B cell (primary cell): ENCODE measurements at regions of chr1 and their contacts with region 1.

Region 1: GRCh38 chr1:109397538-109398342 is at the start of gene SORT1:
- DNase-seq: peak; percentile 75
- ATAC-seq: peak; percentile 92
- H3K4me3 ChIP-seq: peak within 1 kb of the TSS; percentile 20 to 52 (median 46)
- H3K4me3 Mint-ChIP-seq: peak within 1 kb of the TSS; percentile 88
- H3K27ac ChIP-seq: no peak within 1 kb of the TSS
- H3K27ac Mint-ChIP-seq: peak within 1 kb of the TSS; percentile 26
- H3K4me1 ChIP-seq: peaks cover 18 to 20% of the 10 kb centered on the region in 2 donors
- H3K4me1 Mint-ChIP-seq: peaks cover 22% of the 10 kb centered on the region
- H3K27me3 ChIP-seq: peaks cover 0 to 39% (median 34%) of the 10 kb centered on the region in 4 experiments
- H3K27me3 Mint-ChIP-seq: peaks cover 51% of the 10 kb centered on the region
- CTCF ChIP-seq: no peak
- total RNA-seq, gene SORT1: 0.05 and 0.25 TPM in 2 replicates

Region 2: DNA sequence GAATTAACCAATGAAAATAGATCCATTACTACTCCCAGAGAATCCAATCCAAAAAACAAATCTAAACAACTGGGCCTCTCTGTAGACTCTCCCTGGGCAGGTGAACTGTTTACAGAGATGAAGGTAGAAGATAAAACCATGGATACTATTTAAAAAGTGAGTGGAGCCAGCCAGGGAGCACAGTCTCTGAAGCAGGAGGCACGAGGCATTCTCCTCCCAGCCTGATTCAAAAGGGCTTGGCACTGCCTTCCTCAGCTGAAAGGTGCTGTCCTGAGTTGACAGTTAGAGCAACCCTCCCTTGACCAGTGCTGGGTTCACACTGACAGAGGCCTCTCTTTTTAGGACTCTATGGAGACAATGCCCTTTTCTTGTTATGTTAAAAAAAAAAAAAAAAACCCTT is 773.7 kb before region 1 on chr1:
- CTCF ChIA-PET with region 1: no interaction called
- POLR2A ChIA-PET with region 1: no interaction called
- intact Hi-C with region 1: no loop called
- DNase-seq: no peak
- ATAC-seq: no peak
- H3K4me3 ChIP-seq: no peak overlapping the region
- H3K4me3 Mint-ChIP-seq: no peak overlapping the region
- H3K27ac ChIP-seq: no peak overlapping the region
- H3K27ac Mint-ChIP-seq: no peak overlapping the region
- H3K4me1 ChIP-seq: no peaks in the 10 kb centered on the region
- H3K4me1 Mint-ChIP-seq: no peaks in the 10 kb centered on the region
- H3K27me3 ChIP-seq: no peaks in the 10 kb centered on the region
- H3K27me3 Mint-ChIP-seq: no peaks in the 10 kb centered on the region
- CTCF ChIP-seq: no peak

Region 3: DNA sequence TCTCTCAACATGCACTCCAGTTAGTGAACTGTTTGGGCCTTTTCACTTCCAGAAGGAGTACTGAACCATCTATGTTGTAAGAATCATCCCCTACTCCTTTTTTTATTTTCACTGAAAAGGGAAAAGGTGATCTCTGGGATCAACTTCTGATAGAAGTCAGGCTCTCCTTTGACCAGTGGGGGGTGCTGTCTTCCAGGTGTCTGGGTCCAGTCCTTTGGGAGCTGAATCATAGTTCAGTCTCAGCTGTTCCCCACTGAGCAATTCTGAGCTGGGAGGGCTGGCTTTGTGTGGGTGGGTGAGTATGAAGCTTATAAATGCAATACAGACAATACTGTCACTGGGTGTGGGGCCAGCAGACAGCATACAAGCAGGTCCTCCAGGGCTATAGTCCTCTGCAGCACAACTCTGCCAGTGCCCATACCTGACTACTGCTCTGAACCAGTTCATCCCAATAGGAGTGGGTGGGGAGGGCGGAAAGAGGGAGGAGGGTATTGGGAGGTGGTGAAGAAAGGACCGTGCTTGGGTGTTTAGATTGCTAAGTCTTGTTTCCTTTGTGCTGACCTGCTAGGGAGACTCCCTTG is 196.5 kb before region 1 on chr1:
- CTCF ChIA-PET with region 1: interaction called, 13 read pairs
- POLR2A ChIA-PET with region 1: no interaction called
- intact Hi-C with region 1: no loop called
- DNase-seq: no peak
- ATAC-seq: no peak
- H3K4me3 ChIP-seq: no peak overlapping the region
- H3K4me3 Mint-ChIP-seq: no peak overlapping the region
- H3K27ac ChIP-seq: no peak overlapping the region
- H3K27ac Mint-ChIP-seq: no peak overlapping the region
- H3K4me1 ChIP-seq: peaks cover 8% of the 10 kb centered on the region in 2 donors
- H3K4me1 Mint-ChIP-seq: peaks cover 9% of the 10 kb centered on the region
- H3K27me3 ChIP-seq: peaks cover 0 to 3% (median 0%) of the 10 kb centered on the region in 4 experiments
- H3K27me3 Mint-ChIP-seq: peaks cover 9% of the 10 kb centered on the region
- CTCF ChIP-seq: peak; percentile 17

Region 4: GRCh38 chr1:109277434-109278204 is 120.1 kb before region 1 on chr1:
- CTCF ChIA-PET with region 1: interaction called, 387 read pairs
- POLR2A ChIA-PET with region 1: interaction called, 5 read pairs
- intact Hi-C with region 1: loop called (anchors 1 kb)
- DNase-seq: peak; percentile 75
- ATAC-seq: peak; percentile 92
- H3K4me3 ChIP-seq: no peak overlapping the region
- H3K4me3 Mint-ChIP-seq: no peak overlapping the region
- H3K27ac ChIP-seq: no peak overlapping the region
- H3K27ac Mint-ChIP-seq: no peak overlapping the region
- H3K4me1 ChIP-seq: peaks cover 2 to 11% of the 10 kb centered on the region in 2 donors
- H3K4me1 Mint-ChIP-seq: peaks cover 6% of the 10 kb centered on the region
- H3K27me3 ChIP-seq: peaks cover 0 to 4% (median 0%) of the 10 kb centered on the region in 4 experiments
- H3K27me3 Mint-ChIP-seq: no peaks in the 10 kb centered on the region
- CTCF ChIP-seq: peak; percentile 87

Region 5: GRCh38 chr1:109307274-109308021 is 90.3 kb before region 1 on chr1:
- CTCF ChIA-PET with region 1: interaction called, 27 read pairs
- POLR2A ChIA-PET with region 1: no interaction called
- intact Hi-C with region 1: no loop called
- DNase-seq: peak; percentile 62
- ATAC-seq: peak; percentile 96
- H3K4me3 ChIP-seq: peak overlapping the region in 3 of 5 experiments; percentile 15 to 41 (median 27)
- H3K4me3 Mint-ChIP-seq: peak overlapping the region; percentile 62
- H3K27ac ChIP-seq: peak overlapping the region; percentile 36 to 55
- H3K27ac Mint-ChIP-seq: peak overlapping the region; percentile 75
- H3K4me1 ChIP-seq: peaks cover 19 to 20% of the 10 kb centered on the region in 2 donors
- H3K4me1 Mint-ChIP-seq: peaks cover 14% of the 10 kb centered on the region
- H3K27me3 ChIP-seq: peaks cover 0 to 14% (median 6%) of the 10 kb centered on the region in 4 experiments
- H3K27me3 Mint-ChIP-seq: no peaks in the 10 kb centered on the region
- CTCF ChIP-seq: no peak

Region 6: GRCh38 chr1:109331113-109331512 is 66.6 kb before region 1 on chr1:
- CTCF ChIA-PET with region 1: no interaction called
- POLR2A ChIA-PET with region 1: no interaction called
- intact Hi-C with region 1: no loop called
- DNase-seq: no peak
- ATAC-seq: no peak
- H3K4me3 ChIP-seq: no peak overlapping the region
- H3K4me3 Mint-ChIP-seq: no peak overlapping the region
- H3K27ac ChIP-seq: no peak overlapping the region
- H3K27ac Mint-ChIP-seq: no peak overlapping the region
- H3K4me1 ChIP-seq: no peaks in the 10 kb centered on the region
- H3K4me1 Mint-ChIP-seq: no peaks in the 10 kb centered on the region
- H3K27me3 ChIP-seq: no peaks in the 10 kb centered on the region
- H3K27me3 Mint-ChIP-seq: peaks cover 16% of the 10 kb centered on the region
- CTCF ChIP-seq: no peak

Region 7: DNA sequence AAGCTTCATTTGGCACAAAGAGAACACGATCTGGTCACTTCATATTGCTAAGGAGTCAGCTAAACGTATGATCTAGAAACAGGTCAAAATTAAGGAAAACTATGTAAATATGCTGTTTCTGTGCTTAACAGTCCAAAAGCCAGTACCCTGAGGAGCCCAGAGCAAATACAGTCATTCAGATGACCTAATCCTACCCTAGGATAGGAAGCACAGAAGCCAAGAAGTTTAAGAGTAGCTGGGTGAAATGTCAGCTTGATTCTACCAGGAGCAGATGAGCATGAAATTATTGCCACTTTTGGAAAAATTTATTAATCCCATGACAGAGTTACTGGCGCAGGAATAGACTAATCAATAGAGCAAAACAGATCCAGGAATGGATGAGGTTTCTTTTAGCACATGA is 18.3 kb before region 1 on chr1:
- CTCF ChIA-PET with region 1: interaction called, 25 read pairs
- POLR2A ChIA-PET with region 1: no interaction called
- intact Hi-C with region 1: no loop called
- DNase-seq: no peak
- ATAC-seq: no peak
- H3K4me3 ChIP-seq: no peak overlapping the region
- H3K4me3 Mint-ChIP-seq: no peak overlapping the region
- H3K27ac ChIP-seq: no peak overlapping the region
- H3K27ac Mint-ChIP-seq: no peak overlapping the region
- H3K4me1 ChIP-seq: no peaks in the 10 kb centered on the region
- H3K4me1 Mint-ChIP-seq: no peaks in the 10 kb centered on the region
- H3K27me3 ChIP-seq: peaks cover 0 to 9% (median 2%) of the 10 kb centered on the region in 4 experiments
- H3K27me3 Mint-ChIP-seq: peaks cover 31% of the 10 kb centered on the region
- CTCF ChIP-seq: no peak

Region 8: GRCh38 chr1:109454497-109455133 is 56.9 kb after region 1 on chr1:
- CTCF ChIA-PET with region 1: no interaction called
- POLR2A ChIA-PET with region 1: no interaction called
- intact Hi-C with region 1: no loop called
- DNase-seq: no peak
- ATAC-seq: no peak
- H3K4me3 ChIP-seq: no peak overlapping the region
- H3K4me3 Mint-ChIP-seq: no peak overlapping the region
- H3K27ac ChIP-seq: no peak overlapping the region
- H3K27ac Mint-ChIP-seq: no peak overlapping the region
- H3K4me1 ChIP-seq: no peaks in the 10 kb centered on the region
- H3K4me1 Mint-ChIP-seq: no peaks in the 10 kb centered on the region
- H3K27me3 ChIP-seq: peaks cover 0 to 12% (median 10%) of the 10 kb centered on the region in 4 experiments
- H3K27me3 Mint-ChIP-seq: peaks cover 36% of the 10 kb centered on the region
- CTCF ChIP-seq: no peak

Region 9: DNA sequence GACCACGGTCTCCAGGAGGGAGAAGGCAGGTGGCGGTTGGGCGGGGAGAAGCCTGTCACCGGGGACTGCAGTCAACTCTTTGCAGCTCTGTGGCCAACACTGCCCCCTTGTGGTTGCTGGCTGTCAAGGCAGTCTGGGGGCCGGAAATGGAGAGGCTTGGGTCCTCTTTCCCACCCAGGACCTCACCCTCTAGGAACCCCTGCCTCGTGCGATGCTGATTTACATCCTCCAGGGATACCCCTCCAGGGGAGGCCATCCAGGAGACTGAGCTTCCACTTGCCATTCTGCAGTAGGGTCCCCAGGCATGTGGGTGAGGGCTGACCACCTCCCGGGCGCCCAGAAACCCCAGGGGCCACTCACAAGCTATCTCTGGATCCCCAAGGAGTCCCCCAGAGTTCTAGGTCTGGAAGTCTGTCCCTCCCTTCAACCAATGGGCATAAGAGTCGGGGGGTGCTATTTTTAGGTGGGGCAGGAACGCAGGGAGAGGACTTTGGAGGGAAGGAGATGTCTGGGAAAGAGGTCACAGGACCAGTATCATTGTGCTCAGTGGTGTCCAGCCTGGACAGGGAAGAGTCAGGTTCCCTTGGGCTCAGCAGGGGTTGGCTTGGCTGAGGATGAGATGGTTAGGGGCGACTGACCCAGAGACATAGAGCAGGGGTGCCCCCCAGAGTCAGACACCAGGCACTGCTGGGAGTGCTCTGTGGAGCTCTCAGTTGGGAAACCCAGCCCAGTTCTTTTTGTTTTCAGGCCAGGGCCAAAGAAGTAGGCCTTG is 134.8 kb after region 1 on chr1:
- CTCF ChIA-PET with region 1: interaction called, 49 read pairs
- POLR2A ChIA-PET with region 1: no interaction called
- intact Hi-C with region 1: loop called (anchors 1 kb)
- DNase-seq: peak; percentile 88
- ATAC-seq: peak; percentile 90
- H3K4me3 ChIP-seq: peak overlapping the region in 4 of 5 experiments; percentile 37 to 67 (median 52)
- H3K4me3 Mint-ChIP-seq: peak overlapping the region; percentile 90
- H3K27ac ChIP-seq: peak overlapping the region in 1 of 2 donors; percentile 21
- H3K27ac Mint-ChIP-seq: peak overlapping the region; percentile 87
- H3K4me1 ChIP-seq: peaks cover 4 to 11% of the 10 kb centered on the region in 2 donors
- H3K4me1 Mint-ChIP-seq: peaks cover 11% of the 10 kb centered on the region
- H3K27me3 ChIP-seq: no peaks in the 10 kb centered on the region
- H3K27me3 Mint-ChIP-seq: no peaks in the 10 kb centered on the region
- CTCF ChIP-seq: peak; percentile 93

Region 10: GRCh38 chr1:110356405-110356804 is 958.7 kb after region 1 on chr1:
- CTCF ChIA-PET with region 1: no interaction called
- POLR2A ChIA-PET with region 1: no interaction called
- intact Hi-C with region 1: no loop called
- DNase-seq: no peak
- ATAC-seq: no peak
- H3K4me3 ChIP-seq: no peak overlapping the region
- H3K4me3 Mint-ChIP-seq: no peak overlapping the region
- H3K27ac ChIP-seq: no peak overlapping the region
- H3K27ac Mint-ChIP-seq: no peak overlapping the region
- H3K4me1 ChIP-seq: no peaks in the 10 kb centered on the region
- H3K4me1 Mint-ChIP-seq: peaks cover 27% of the 10 kb centered on the region
- H3K27me3 ChIP-seq: no peaks in the 10 kb centered on the region
- H3K27me3 Mint-ChIP-seq: no peaks in the 10 kb centered on the region
- CTCF ChIP-seq: no peak